Activated B cell treated with CpG ODN at 0.5 μM for 24 hours (primary cell): ENCODE measurements at regions of chr5 and their contacts with region 1.

Region 1: DNA sequence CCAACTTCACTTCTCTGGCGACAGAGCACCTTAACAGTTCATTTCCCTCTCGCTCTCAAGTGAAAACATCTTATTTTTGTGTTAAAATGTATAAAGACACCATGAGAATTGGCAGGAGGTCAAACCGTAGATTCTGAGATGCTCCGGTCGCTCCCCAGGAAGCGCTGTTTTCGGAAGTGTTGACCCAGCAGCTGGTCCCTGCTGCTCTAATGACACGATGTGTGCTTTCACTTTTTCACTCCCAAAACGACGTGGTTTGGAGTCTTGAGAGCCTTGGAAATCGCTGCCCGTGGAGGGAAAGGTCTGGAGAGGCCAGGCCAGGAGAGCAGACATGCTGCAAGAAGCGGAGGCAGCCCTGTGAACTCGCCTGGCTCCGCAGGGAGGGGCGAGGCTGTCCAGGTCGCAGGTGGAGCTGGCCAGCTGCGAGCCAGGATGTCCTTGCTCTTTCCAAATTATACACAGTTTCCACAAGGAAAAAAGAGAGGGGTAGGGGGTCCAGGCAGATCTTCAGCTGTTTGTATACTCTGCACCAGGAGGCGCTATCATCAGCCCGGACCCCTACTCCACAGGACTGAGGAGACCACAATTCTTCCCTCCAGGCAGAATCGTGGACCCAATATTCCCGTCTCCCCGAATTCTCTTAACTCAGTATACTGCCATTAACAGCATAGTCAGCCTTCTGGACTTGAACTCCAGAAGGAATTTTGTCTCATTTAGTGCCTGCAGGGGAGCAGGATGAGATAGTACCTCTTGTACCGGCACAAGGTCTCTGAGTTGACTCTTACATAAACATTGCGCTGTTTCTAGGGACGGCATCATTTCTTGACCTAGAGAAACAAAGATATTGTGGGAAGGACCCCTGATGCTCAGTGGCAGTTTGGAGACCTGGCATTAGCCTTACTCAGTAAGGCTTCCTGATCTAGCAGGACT is 248.6 kb upstream of the ANKRD55 start:
- DNase-seq: peak; percentile 41
- ATAC-seq: peak; percentile 14
- H3K4me3 Mint-ChIP-seq: peak overlapping the region; percentile 88
- H3K27ac Mint-ChIP-seq: peak overlapping the region; percentile 92
- H3K4me1 Mint-ChIP-seq: peaks cover 45% of the 10 kb centered on the region
- H3K27me3 Mint-ChIP-seq: no peaks in the 10 kb centered on the region
- CTCF ChIP-seq: no peak

Region 2: DNA sequence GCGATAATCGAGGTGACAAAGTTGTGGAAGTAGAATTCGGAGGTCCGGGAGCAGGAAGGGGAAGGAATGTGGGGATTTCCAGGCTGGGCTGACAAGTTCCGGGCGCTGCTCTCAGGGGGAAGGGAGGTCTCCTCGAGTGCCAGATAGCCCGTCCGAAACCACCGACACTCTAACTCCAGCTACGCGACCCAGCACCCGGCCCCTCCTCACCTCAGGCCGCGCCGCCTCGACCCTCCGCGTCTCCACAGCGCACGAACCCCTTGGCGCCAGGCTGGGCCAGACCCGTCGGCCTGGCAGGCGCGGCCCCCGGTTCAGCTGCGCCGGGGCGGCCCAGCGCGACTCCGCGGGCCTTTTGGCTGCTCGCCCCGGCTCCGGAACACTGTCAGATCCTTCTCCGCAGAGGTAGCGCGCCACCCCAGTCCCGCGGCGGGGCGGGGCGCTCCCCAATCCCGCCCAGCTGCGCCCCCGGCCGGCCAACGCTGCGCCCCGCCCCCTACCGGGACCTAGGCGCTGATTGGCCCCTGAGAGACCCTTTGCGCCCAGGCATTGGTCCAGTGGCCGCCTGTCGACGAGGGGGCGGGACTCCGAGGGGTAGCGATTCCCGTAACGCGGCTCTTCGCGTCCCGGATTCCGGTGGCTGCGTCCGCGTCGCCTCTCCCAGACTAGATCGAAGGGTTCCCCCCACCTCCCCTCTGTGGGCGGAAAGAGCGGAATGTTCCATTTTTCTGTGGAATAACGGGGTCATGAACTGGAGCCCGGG is 486.9 kb before region 1 on chr5 and contains the start of gene IL6ST:
- CTCF ChIA-PET with region 1: no interaction called
- POLR2A ChIA-PET with region 1: no interaction called
- intact Hi-C with region 1: loop called (anchors 2 kb)
- DNase-seq: peak; percentile 95
- ATAC-seq: peak; percentile 92
- H3K4me3 Mint-ChIP-seq: peak within 1 kb of the TSS; percentile 96
- H3K27ac Mint-ChIP-seq: peak within 1 kb of the TSS; percentile 95
- H3K4me1 Mint-ChIP-seq: peaks cover 38% of the 10 kb centered on the region
- H3K27me3 Mint-ChIP-seq: peaks cover 5% of the 10 kb centered on the region
- CTCF ChIP-seq: no peak
- total RNA-seq, gene IL6ST: 39.8 and 48.3 TPM in 2 replicates

Region 3: DNA sequence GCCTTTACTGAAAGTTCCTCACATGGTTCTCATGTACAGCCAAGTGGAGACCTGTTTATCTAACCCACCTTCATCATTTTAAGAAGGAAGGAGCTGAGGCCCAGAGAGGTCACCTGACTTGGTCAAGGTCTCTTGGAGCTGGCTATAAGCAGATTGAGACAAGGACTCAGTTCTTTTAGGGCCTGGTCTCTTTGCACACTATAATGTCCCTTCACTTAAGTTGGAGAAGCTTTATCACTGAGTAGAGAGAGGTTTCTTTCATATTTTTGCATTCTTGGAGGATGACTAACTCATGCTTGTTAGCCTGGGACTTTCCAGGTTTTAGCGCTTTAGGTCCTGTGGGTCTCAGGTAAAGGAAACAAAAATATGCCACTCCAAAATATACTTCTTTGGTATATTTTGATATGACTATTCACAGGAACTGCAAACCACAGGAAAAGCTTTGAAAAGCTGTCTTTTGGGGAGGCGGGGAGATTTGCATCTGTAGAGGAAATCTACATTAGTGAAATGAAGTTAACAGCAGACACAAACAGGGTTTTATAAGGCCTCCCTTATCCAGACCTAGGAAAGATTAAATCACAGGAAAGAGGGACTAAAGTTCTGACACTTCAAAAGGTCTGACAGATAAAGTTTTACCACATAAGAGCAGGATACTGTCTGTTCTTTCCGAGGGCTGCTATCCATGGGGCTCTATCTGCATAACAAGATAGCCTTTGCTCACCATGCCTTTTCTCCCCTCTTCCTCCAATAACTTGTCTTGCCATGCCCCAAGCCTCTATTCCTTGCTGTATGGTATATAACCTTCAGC is 152.7 kb before region 1 on chr5:
- CTCF ChIA-PET with region 1: no interaction called
- POLR2A ChIA-PET with region 1: interaction called, 11 read pairs
- intact Hi-C with region 1: loop called (anchors 2 kb)
- DNase-seq: no peak
- ATAC-seq: peak; percentile 80
- H3K4me3 Mint-ChIP-seq: peak overlapping the region; percentile 52
- H3K27ac Mint-ChIP-seq: peak overlapping the region; percentile 89
- H3K4me1 Mint-ChIP-seq: peaks cover 59% of the 10 kb centered on the region
- H3K27me3 Mint-ChIP-seq: no peaks in the 10 kb centered on the region
- CTCF ChIP-seq: no peak

Region 4: GRCh38 chr5:56405116-56405908 is 76.4 kb before region 1 on chr5:
- CTCF ChIA-PET with region 1: no interaction called
- POLR2A ChIA-PET with region 1: no interaction called
- intact Hi-C with region 1: no loop called
- DNase-seq: no peak
- ATAC-seq: no peak
- H3K4me3 Mint-ChIP-seq: no peak overlapping the region
- H3K27ac Mint-ChIP-seq: no peak overlapping the region
- H3K4me1 Mint-ChIP-seq: no peaks in the 10 kb centered on the region
- H3K27me3 Mint-ChIP-seq: no peaks in the 10 kb centered on the region
- CTCF ChIP-seq: no peak

Region 5: DNA sequence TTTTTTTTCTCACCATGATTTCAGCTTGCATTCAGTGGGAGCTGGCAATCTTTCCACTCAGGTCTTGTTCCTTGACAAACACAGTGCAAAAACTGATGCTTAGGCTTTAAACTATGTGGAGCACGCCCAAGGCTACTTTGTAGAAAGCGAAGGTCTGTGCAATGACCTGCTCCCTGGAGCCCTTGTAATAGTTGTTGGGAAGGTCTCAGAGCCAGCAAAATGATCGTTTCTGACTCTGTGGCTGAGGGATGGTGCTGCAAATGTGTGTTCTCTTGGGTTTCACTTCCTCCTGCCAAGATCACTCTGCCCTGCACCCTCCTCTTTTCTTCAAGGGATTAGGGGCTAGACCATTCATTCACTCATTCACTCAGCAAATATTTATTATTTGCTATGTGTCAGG is 84.0 kb after region 1 on chr5:
- CTCF ChIA-PET with region 1: no interaction called
- POLR2A ChIA-PET with region 1: no interaction called
- intact Hi-C with region 1: loop called (anchors 1 kb)
- DNase-seq: peak; percentile 32
- ATAC-seq: peak; percentile 97
- H3K4me3 Mint-ChIP-seq: peak overlapping the region; percentile 49
- H3K27ac Mint-ChIP-seq: peak overlapping the region; percentile 33
- H3K4me1 Mint-ChIP-seq: peaks cover 48% of the 10 kb centered on the region
- H3K27me3 Mint-ChIP-seq: no peaks in the 10 kb centered on the region
- CTCF ChIP-seq: no peak

Region 6: DNA sequence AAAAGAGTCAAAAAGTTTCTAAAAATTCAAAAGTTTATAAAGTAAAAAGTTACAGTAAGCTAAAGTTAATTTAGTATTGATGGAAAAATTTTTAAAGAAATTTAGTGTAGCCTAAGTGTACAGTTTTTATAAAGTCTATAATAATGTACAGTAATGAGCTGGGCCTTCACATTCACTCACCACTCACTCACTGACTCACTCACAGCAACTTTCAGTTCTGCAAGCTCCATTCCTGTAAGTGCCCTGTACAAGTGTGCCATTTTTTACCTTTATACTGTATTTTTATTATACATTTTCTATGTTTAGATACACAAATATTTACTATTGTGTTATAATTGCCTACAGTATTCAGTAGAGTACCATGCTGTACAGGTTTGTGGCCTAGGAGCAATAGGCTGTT is 94.1 kb after region 1 on chr5:
- CTCF ChIA-PET with region 1: no interaction called
- POLR2A ChIA-PET with region 1: no interaction called
- intact Hi-C with region 1: no loop called
- DNase-seq: no peak
- ATAC-seq: peak; percentile 65
- H3K4me3 Mint-ChIP-seq: no peak overlapping the region
- H3K27ac Mint-ChIP-seq: no peak overlapping the region
- H3K4me1 Mint-ChIP-seq: peaks cover 20% of the 10 kb centered on the region
- H3K27me3 Mint-ChIP-seq: no peaks in the 10 kb centered on the region
- CTCF ChIP-seq: no peak

Region 7: DNA sequence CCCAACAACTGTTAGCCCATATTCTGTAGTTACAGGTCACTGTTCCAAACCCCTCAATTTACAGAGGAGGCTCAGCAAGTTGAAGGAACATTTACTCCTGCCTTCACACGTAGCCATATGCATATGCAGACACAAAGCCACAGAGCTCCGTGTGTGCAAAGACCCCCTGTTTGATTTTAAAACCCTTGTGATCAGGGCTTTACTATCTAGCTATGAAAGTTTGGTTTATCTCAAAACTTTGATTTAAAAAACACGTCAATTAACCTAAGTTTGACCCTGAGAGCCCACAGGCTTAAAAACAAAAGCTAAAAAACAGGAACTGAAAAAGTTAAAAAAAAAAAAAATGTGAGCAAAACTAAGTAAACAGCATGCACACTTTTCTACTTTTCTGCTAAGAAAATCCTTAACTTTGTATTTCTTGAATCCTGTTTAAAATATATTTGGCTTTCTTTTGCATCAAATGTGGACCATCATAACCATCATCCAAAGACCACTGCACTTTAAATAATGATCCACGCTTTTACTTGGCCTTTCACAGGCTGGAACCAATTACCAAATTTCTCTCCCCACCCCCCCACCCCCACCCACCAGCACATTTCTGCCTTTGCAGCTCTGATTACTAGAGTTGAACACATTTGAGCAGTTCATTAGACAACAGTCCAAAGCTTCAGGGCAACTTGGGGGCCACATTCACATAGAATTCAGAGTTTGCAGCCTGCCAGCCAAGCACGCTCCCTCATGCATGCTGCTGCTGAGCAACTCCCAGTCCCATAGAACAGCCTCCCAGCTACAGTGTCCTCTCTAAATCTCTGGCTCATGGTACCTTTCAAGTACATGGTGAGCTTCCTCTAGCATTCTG is 204.9 kb after region 1 on chr5:
- CTCF ChIA-PET with region 1: no interaction called
- POLR2A ChIA-PET with region 1: interaction called, 9 read pairs
- intact Hi-C with region 1: loop called (anchors 1 kb)
- DNase-seq: peak; percentile 31
- ATAC-seq: peak; percentile 72
- H3K4me3 Mint-ChIP-seq: peak overlapping the region; percentile 62
- H3K27ac Mint-ChIP-seq: peak overlapping the region; percentile 88
- H3K4me1 Mint-ChIP-seq: peaks cover 98% of the 10 kb centered on the region
- H3K27me3 Mint-ChIP-seq: no peaks in the 10 kb centered on the region
- CTCF ChIP-seq: no peak

Region 8: GRCh38 chr5:56763711-56764466 is 282.2 kb after region 1 on chr5:
- CTCF ChIA-PET with region 1: no interaction called
- POLR2A ChIA-PET with region 1: no interaction called
- intact Hi-C with region 1: loop called (anchors 5 kb)
- DNase-seq: peak; percentile 35
- ATAC-seq: peak; percentile 91
- H3K4me3 Mint-ChIP-seq: peak overlapping the region; percentile 38
- H3K27ac Mint-ChIP-seq: peak overlapping the region; percentile 78
- H3K4me1 Mint-ChIP-seq: peaks cover 78% of the 10 kb centered on the region
- H3K27me3 Mint-ChIP-seq: no peaks in the 10 kb centered on the region
- CTCF ChIP-seq: no peak